AG04449 (cell line): ENCODE measurements at regions of chr5 and their contacts with region 1.

Region 1: GRCh38 chr5:159987031-159987674 is 21.8 kb upstream of the TTC1 start:
- DNase-seq: no peak
- H3K4me3 ChIP-seq: peak overlapping the region; percentile 57
- CTCF ChIP-seq: peak; percentile 90

Region 2: DNA sequence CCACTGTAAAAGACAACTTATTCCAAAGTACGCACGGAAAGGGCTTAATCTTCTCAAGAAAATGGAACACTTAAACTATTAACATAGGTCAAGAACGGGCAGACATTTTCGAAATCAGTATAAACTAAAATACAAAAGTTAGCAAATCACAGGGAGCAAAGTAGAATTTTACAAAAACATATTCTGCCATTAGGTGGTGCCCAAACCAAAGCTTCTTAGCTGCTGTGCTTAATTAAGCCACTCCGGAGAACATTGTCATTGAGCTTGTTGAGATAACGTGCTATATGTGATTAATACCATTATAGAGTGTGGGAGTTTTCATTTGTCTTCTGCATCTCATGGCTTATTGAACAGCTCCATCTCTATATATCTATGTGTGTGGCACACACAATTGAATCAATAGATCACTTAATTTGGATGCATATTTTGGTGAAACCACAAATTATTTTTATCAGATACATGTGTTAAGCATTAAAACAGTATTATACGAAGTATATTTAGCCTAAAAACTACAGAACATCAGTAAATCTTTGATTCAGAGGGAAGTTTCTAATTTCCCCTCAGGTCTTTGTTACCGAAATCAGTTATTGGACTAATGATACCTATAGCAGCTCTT is 700.6 kb before region 1 on chr5:
- CTCF ChIA-PET with region 1: interaction called, 23 read pairs
- POLR2A ChIA-PET with region 1: no interaction called
- DNase-seq: no peak
- H3K4me3 ChIP-seq: no peak overlapping the region
- CTCF ChIP-seq: peak; percentile 44

Region 3: DNA sequence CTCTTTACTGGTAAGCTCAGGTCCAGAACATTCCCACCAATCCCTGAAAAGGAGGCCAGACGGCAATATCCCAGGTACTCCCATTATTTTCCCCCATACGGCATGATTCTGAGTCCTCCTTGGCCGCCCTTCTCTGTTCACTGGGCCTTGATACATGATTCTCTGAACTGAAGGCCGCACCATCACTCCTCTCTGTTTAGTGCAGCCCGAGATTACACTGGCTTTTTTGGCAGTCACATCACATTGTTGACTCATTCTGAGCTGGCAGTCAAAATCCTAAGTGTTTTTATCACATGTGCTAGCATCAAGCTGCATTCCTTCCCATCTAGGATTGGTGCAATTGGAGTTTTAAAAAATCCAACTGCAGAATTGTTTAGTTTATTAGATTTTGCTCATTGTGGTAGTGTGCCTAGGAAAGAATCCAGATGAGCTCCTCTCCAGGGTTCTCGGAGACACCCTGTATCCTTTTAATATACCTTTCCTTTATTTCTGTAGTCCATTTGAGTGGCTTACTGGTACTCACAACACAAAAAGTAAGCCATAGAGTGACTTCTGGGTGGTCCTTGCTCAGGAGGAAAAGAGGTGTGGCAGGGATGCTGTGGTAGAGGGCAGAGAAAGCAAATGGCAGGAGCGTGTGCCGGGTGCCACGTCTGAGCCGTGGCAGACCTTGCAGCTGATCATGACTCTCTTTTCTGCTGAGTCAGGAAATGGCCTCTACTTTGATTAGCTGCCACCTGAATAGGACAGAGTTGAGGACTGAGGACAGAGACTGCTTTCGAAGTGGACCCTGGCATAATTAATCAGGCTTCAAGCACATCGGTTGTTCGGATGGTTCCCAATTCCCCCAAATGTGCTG is 535.7 kb before region 1 on chr5:
- CTCF ChIA-PET with region 1: interaction called, 73 read pairs
- POLR2A ChIA-PET with region 1: no interaction called
- DNase-seq: peak; percentile 77
- H3K4me3 ChIP-seq: no peak overlapping the region
- CTCF ChIP-seq: no peak

Region 4: DNA sequence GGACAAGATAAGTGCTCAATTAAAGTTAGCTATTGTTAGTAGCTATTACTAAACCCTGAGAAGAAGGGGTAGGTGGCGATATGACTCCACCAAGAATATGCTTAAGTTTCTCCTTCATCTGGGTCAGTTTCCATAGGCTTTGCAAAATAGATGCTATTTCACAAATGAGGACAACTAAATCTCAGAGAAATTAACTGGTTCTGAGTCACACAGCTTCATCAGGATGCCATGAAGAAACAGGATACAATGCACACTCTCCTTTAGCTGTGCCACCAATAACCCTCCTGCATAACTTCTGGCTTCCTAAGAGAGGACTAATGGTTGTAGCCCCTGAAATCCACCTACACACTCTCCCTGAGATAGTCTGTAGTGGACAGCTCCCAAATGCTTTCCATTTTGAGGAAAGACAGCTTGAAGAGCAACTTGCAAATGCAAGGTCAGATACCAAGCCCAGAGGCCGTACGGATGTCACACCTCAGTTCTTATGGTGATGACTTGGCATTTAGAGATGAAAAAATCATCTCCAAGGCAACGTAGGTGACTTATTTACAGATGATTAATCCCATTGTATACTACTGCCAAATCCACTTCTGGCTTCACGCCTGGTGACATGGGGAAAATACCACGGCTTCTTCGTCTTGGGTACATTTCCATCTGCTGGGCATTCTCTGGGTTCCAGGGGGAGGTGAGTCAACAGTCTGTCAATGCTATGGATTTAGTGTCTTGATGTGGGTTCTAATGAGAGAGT is 405.5 kb before region 1 on chr5:
- CTCF ChIA-PET with region 1: interaction called, 16 read pairs
- POLR2A ChIA-PET with region 1: no interaction called
- DNase-seq: peak; percentile 67
- H3K4me3 ChIP-seq: no peak overlapping the region
- CTCF ChIP-seq: peak; percentile 11

Region 5: DNA sequence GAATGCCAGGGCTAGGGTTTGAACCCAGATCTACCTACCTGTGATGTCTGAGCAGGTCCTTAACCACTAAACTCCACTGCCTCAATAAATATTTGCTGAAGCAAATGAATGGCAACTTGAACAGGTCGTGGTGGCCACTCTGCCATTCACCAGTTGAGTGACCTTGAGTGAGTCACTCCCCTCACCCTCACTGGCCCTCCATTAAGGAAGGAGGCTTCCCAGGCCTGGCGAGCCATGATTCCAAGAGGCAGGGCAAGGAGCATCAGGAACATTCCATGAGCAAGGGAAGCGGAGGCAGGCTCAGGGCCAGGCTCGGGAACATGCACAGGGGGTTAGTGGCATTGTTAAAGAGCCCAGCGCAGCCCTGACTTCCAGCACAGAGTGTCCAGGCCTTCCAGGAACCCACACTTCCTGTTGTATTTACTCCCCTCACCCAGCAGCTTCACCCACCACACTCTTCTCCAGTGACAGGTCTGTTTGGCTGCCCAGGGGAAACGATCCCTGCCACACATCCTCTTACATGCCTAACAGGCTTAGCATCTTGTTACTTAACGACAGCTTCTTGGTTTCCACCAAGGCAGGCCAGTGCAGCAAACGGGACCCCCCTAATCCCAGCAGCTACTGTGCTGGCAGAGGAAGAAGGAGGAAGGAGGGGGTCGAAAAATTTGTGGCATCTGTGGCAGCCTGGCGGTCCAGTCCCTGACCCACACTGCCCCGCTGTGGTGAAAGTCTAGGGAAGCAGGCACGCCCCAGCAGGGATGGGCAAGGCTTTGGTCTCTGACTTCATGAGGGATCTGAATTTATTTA is 21.9 kb before region 1 on chr5:
- CTCF ChIA-PET with region 1: interaction called, 12 read pairs
- POLR2A ChIA-PET with region 1: no interaction called
- DNase-seq: no peak
- H3K4me3 ChIP-seq: no peak overlapping the region
- CTCF ChIP-seq: peak; percentile 75

Region 6: GRCh38 chr5:160001457-160001856 is 14.3 kb after region 1 on chr5:
- CTCF ChIA-PET with region 1: interaction called, 23 read pairs
- POLR2A ChIA-PET with region 1: no interaction called
- DNase-seq: no peak
- H3K4me3 ChIP-seq: no peak overlapping the region
- CTCF ChIP-seq: no peak

Region 7: DNA sequence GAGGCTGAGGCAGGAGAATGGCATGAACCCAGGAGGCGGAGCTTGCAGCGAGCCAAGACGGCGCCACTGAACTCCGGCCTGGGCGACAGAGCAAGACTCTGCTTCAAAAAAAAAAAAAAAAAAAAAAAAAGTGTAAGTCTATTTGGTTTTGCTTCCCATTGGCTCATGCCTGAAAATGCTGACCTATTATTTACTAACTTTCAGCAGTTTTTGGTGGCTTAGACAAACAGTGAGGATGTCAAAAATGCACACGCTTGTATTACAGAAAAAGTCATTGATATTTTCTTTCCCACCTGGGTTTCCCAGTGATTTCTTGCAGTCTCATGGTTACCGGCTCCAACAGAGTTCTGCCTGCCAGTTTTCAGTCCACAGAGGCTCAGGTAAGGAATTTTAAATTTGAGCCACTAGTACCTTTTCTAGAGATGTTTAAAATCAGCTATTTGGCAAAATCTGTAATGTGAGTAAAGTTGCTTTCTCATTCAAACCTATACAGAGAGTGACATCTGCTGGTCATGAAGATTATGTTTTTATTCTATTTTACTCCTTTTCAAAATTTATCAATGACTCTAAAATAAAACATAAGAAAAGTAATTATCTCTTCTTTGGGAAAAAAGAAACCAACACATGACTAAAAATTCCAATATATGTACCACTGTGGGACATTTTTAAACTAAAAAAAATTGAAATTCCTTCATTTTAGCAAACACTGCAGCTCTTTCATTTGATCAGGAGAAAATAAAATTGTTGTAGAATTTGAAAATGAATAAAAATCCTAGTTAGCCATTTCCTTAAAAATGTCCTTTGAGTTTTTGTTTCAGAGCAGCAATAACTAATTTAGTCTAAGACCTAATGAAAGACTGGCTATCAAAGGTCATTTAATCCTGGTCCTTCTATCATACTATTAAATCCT is 403.9 kb after region 1 on chr5:
- CTCF ChIA-PET with region 1: interaction called, 10 read pairs
- POLR2A ChIA-PET with region 1: no interaction called
- DNase-seq: no peak
- H3K4me3 ChIP-seq: no peak overlapping the region
- CTCF ChIP-seq: peak; percentile 25